Activated CD8-positive, alpha-beta T cell treated with anti-CD3 and anti-CD28 coated beads for 36 hours (primary cell): ENCODE measurements at regions of chr9 and their contacts with region 1.

Region 1: DNA sequence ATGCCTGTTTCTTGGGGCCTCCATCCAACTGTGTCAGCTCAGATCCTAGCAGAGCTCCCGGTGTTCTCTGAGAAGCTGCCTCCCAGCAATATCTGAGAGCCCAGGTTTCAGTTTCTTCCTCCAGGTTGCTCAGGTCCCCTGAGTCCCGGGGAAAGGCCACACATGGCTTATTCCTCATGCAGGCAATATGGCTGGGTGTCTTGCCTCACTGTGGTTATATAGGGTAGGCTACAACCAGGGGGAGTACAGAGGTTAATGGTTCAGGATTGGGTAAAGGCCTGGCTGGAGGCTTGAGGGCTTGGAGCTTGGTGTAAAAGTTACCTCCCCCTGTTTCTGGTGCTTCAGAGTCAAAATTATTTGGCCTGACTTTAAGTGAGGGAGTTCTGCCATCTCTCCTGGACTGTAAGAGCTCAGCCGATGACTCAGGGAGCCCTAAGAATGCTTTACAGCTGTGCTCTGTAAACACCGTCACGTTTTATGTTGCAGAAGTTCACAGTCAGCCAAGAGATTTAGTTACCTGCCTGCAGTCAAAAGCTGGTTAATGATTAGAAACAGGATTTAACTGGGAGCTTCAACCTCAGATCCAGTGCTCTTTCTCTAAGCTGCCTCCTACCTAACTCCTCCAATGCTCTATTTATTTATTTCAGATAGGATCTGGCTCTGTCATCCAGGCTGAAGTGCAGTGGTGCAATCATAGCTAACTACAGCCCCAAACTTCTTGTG is 24.3 kb upstream of the UBAP2 start:
- DNase-seq: no peak
- ATAC-seq: no peak
- H3K4me3 Mint-ChIP-seq: no peak overlapping the region
- H3K27ac Mint-ChIP-seq: no peak overlapping the region
- H3K4me1 Mint-ChIP-seq: no peaks in the 10 kb centered on the region
- H3K27me3 Mint-ChIP-seq: no peaks in the 10 kb centered on the region
- CTCF ChIP-seq: no peak

Region 2: DNA sequence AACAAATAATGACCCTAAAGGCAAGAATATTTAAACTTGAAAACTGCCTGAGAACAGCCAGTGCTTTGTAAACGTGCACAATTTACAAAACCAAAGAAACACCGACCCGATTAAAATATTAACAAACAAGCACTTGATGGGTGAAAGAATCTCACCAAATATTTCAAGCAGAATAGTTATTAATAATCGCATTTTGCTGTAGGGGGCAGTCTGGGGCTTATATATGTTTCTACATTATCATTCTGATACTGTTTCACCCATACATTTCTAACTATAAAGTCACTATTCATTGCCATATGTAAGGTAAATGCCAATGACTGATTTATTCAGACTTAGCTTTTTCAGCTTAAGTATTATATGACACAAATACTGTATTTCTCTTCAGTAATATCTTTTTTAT is 62.0 kb before region 1 on chr9:
- CTCF ChIA-PET with region 1: interaction called, 18 read pairs
- POLR2A ChIA-PET with region 1: no interaction called
- intact Hi-C with region 1: loop called (anchors 10 kb)
- DNase-seq: peak; percentile 16
- ATAC-seq: no peak
- H3K4me3 Mint-ChIP-seq: no peak overlapping the region
- H3K27ac Mint-ChIP-seq: no peak overlapping the region
- H3K4me1 Mint-ChIP-seq: no peaks in the 10 kb centered on the region
- H3K27me3 Mint-ChIP-seq: no peaks in the 10 kb centered on the region
- CTCF ChIP-seq: no peak

Region 3: DNA sequence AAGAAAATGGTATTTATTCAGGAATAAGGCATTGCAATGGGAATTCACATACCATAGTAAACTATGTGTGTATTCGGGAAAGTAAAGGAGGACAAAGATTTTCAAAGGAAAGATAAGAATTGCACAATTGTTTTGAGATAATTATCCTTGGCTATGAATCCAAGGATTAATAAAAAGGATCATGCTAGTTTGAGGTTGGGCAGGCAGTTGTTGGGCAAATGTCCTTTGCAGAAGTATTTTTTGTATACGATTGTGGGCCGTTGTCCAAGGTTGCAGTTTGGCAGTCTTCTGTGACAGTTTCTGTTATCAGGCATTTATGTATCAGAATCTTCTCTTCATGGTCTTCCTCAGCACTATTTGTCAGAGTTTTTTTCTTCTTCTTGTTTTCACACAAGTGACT is 13.7 kb before region 1 on chr9:
- CTCF ChIA-PET with region 1: interaction called, 19 read pairs
- POLR2A ChIA-PET with region 1: interaction called, 3 read pairs
- intact Hi-C with region 1: no loop called
- DNase-seq: no peak
- ATAC-seq: no peak
- H3K4me3 Mint-ChIP-seq: no peak overlapping the region
- H3K27ac Mint-ChIP-seq: no peak overlapping the region
- H3K4me1 Mint-ChIP-seq: no peaks in the 10 kb centered on the region
- H3K27me3 Mint-ChIP-seq: no peaks in the 10 kb centered on the region
- CTCF ChIP-seq: no peak

Region 4: GRCh38 chr9:34084562-34084961 is 11.5 kb after region 1 on chr9:
- CTCF ChIA-PET with region 1: interaction called, 22 read pairs
- POLR2A ChIA-PET with region 1: no interaction called
- intact Hi-C with region 1: no loop called
- DNase-seq: no peak
- ATAC-seq: no peak
- H3K4me3 Mint-ChIP-seq: no peak overlapping the region
- H3K27ac Mint-ChIP-seq: no peak overlapping the region
- H3K4me1 Mint-ChIP-seq: peaks cover 5% of the 10 kb centered on the region
- H3K27me3 Mint-ChIP-seq: no peaks in the 10 kb centered on the region
- CTCF ChIP-seq: no peak